ENCODE measurements at regions of chr17 and their contacts with region 1.

Region 1: DNA sequence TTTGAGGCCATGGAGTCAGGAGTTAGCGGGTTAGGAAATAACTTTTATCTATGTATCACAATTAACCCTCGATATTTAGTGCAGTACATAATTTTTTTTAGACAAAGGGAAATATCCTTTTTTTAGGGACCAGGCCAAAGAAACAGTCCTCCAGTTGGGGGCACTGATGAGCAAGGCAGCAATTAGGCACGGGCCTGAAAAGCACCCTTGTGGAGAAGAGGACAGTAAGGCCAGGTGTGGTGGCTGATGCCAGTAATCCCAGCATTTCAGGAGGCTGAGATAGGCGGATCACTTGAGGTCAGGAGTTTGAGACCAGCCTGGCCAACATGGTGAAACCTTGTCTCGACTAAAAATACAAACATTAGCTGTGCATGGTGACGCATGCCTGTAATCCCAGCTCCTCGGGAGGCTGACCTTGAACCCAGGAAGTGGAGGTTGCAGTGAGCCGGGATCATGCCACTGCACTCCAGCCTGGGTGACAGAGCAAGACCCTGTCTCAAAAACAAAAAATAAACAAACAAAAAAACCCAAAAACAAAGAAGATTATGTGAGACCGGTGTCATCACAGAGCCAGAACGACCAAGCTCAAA is 158.3 kb upstream of the NOL11 start:
- DNase-seq: no peak
- ATAC-seq: no peak
- H3K4me3 Mint-ChIP-seq: no peak overlapping the region
- H3K27ac Mint-ChIP-seq: no peak overlapping the region
- H3K4me1 Mint-ChIP-seq: no peaks in the 10 kb centered on the region
- H3K27me3 Mint-ChIP-seq: no peaks in the 10 kb centered on the region
- CTCF ChIP-seq: no peak

Region 2: DNA sequence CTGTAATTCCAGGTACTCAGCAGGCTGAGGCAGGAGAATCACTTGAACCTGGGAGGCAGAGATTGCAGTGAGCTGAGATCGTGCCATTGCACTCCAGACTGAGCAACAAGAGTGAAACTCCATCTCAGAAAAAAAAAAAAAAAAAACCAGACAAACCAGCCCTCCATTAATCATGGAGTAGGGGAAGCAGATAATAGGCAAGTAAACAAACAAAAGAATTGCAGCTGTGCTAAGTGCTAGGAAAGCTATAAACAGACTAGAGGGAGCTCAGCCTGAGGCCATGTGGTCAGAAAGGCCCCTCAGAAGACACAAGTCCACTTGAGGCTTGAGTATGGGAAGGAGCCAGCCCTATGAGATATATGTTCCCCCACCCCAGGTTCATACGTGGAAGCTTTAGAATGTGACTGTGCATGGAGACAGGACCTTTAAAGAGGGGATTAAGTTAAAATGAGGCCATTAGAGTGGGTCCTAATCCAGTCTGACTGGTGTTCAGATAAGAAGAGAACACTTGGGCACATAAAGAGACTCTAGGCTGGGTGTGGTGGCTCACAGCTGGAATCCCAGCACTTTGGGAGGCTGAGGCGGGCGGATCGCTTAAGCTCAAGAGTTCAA is 25.6 kb after region 1 on chr17:
- CTCF ChIA-PET with region 1: no interaction called
- POLR2A ChIA-PET with region 1: no interaction called
- intact Hi-C with region 1: no loop called
- DNase-seq: no peak
- ATAC-seq: no peak
- H3K4me3 Mint-ChIP-seq: no peak overlapping the region
- H3K27ac Mint-ChIP-seq: no peak overlapping the region
- H3K4me1 Mint-ChIP-seq: peaks cover 9% of the 10 kb centered on the region
- H3K27me3 Mint-ChIP-seq: no peaks in the 10 kb centered on the region
- CTCF ChIP-seq: no peak

Region 3: GRCh38 chr17:67602956-67603355 is 43.5 kb after region 1 on chr17:
- CTCF ChIA-PET with region 1: interaction called, 7 read pairs
- POLR2A ChIA-PET with region 1: no interaction called
- intact Hi-C with region 1: loop called (anchors 1 kb)
- DNase-seq: no peak
- ATAC-seq: peak; percentile 75
- H3K4me3 Mint-ChIP-seq: no peak overlapping the region
- H3K27ac Mint-ChIP-seq: no peak overlapping the region
- H3K4me1 Mint-ChIP-seq: no peaks in the 10 kb centered on the region
- H3K27me3 Mint-ChIP-seq: no peaks in the 10 kb centered on the region
- CTCF ChIP-seq: no peak

Measured in activated B cell treated with CpG ODN at 0.5 μM for 24 hours (primary cell).